Activated CD4-positive, alpha-beta T cell treated with anti-CD3 and anti-CD28 coated beads, Interleukin-2, amount 10 ng/mL, durations not matched to agents 7 days and 5 days (primary cell): ENCODE measurements at regions of chr16 and their contacts with region 1.

Region 1: DNA sequence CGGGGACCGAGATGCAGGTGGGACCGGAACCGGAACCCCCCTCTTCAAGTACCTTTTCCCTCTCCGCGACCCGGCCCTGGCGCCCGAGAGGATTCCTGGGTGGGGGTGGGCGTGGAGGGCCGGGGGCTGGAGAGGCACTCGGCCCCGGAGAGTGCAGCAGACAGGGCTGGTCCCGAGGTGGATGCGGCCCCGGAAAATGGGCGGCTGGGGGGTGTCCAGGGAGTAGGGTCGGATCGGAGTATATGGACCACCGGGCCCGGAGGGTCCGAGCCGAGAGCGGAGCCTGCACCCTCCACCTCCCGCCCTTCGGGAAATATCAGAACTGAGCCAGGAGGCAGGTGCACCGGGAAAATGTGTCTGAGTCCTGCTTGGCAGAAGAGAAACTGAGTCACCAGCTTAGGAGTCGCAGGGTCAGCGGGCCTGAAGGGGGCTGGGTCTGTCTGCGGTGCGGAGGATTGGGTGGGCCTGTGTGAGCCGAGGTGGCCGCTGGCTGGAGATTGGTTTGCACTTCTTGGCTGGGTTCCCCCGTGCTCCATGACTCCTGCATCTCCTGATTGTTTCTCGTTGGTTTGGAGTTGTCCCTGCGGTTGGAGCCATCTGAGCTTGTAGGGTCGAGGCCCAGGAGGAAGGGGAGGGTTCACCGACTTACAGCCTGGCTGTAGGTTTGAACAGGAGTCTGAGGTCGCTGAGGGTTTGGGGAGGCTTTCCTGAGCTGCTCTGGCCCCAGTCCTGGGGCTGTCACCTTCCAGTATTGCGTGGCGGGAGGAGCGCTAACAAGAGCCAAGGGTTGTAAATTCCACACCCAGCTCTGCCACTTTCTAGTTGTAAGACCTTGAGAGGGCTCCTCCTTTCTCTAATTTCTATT is 518 bp downstream of the SH2B1 start:
- DNase-seq: peak; percentile 24
- H3K4me3 Mint-ChIP-seq: peak overlapping the region; percentile 86
- H3K27ac Mint-ChIP-seq: peak overlapping the region; percentile 98
- H3K4me1 Mint-ChIP-seq: peaks cover 33% of the 10 kb centered on the region
- H3K27me3 Mint-ChIP-seq: no peaks in the 10 kb centered on the region

Region 2: DNA sequence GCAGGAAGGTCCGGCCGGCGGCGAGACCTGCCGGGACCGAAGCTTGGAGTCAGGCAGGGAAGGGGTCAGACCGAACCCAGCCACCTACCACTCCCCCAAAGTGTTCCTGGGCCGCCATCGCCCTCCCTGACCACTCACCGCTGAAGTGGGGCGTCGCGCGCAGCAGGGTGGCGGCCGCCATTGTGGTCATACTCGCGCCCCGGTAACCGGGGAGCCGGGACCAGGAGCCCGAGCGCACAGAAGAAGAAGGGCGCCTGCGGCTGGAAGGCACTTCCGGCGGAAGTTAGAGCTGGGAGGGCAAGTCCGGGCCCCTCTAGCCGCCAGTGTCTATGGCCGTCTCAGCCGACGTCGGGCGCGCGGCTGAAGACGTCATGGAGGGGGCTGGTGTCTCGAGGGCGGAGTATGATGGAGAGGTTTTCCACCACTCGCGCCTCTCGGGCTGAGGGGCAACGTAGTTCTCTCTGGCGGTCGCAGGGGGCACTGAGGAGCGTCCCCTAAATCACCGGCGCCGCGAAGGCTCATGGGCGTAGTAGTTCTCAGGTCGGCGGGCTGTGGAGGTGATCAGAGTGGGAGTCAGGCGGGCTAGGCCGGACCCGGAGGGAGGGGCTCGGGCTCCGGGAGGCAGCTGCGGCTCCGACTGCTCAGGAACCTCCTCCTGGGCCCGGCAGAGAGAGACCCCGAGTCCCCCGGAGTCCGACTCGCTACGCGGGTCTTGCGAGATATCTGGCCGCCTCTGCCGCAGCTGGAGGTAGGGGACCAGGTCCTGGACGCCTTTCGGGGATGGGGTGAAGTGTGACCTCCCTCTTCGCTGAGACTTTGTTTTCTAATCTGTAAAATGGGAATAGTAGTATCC is 17.9 kb before region 1 on chr16 and contains the start of gene TUFM:
- CTCF ChIA-PET with region 1: interaction called, 34 read pairs
- POLR2A ChIA-PET with region 1: interaction called, 5 read pairs
- DNase-seq: peak; percentile 99
- H3K4me3 Mint-ChIP-seq: peak within 1 kb of the TSS; percentile 90
- H3K27ac Mint-ChIP-seq: peak within 1 kb of the TSS; percentile 93
- H3K4me1 Mint-ChIP-seq: peaks cover 35% of the 10 kb centered on the region
- H3K27me3 Mint-ChIP-seq: no peaks in the 10 kb centered on the region
- total RNA-seq, gene TUFM: 105 to 125 TPM

Region 3: GRCh38 chr16:28910086-28911031 is 46.2 kb after region 1 on chr16:
- CTCF ChIA-PET with region 1: no interaction called
- POLR2A ChIA-PET with region 1: no interaction called
- DNase-seq: no peak
- H3K4me3 Mint-ChIP-seq: no peak overlapping the region
- H3K27ac Mint-ChIP-seq: no peak overlapping the region
- H3K4me1 Mint-ChIP-seq: no peaks in the 10 kb centered on the region
- H3K27me3 Mint-ChIP-seq: no peaks in the 10 kb centered on the region